Caco-2 (cell line): ENCODE measurements at regions of chr5 and their contacts with region 1.

Region 1: DNA sequence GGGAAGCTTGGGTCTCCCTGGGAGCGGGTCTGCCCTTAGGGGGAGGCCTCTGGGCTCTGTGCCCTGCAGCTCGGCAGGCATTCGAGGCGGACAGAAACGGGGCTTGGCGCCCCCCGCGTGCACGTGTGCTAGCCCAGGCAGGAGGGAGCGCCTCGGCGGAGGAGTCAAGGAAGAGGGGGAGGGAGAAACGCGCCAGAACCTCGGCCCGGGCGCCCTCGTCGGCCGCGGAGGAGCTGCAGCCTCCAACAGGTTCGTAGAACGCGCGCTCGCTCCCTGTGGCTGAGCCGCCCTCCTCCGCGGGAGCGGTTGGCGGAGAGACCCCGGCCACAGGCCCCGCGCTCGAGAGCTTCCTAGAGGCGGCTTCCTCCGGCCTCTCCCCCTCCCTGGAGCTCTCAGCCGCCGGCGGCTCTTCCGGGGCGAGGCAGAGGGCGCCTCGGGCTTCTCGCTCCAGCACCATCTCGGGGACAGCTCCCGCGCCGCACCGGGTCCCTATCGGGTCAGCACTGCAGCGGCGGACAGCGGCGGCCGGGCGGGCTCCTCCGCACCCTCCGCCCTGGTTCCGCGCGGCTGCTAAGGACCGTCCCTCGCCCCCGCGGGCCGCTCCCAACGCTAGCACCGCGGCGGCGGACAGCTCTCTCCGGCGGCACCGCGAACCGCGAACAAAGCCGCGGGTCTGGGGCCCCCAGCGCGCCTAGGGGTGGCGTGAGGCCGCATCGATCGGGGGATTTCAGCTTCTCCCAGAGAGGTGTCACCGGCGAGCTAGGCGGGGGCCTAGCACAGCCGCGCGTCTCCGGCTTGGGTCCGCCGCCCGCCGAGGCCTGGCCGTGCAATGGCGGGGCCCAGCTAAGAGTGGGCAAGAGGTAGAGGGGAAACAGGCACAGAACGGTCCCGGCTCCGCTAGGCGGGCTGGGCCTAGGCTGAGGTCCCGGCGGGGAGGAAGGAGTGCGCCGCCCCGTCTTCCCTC is 74.6 kb upstream of the CPLX2 start:
- DNase-seq: peak; percentile 84 to 95
- H3K4me3 ChIP-seq: peak overlapping the region; percentile 29
- H3K4me3 Mint-ChIP-seq: peak overlapping the region; percentile 65
- H3K27ac Mint-ChIP-seq: no peak overlapping the region
- H3K4me1 ChIP-seq: peaks cover 10% of the 10 kb centered on the region; the same call in 1 of the 2 replicates
- H3K4me1 Mint-ChIP-seq: no peaks in the 10 kb centered on the region
- H3K27me3 ChIP-seq: peaks cover 1% of the 10 kb centered on the region; the same call in 1 of the 2 replicates
- H3K27me3 Mint-ChIP-seq: peaks cover 21% of the 10 kb centered on the region
- CTCF ChIP-seq: no peak

Region 2: GRCh38 chr5:175873088-175873454 is 76.3 kb after region 1 on chr5:
- CTCF ChIA-PET with region 1: interaction called, 11 read pairs
- POLR2A ChIA-PET with region 1: no interaction called
- intact Hi-C with region 1: loop called (anchors 5 kb)
- DNase-seq: no peak
- H3K4me3 ChIP-seq: no peak overlapping the region
- H3K4me3 Mint-ChIP-seq: no peak overlapping the region
- H3K27ac Mint-ChIP-seq: no peak overlapping the region
- H3K4me1 ChIP-seq: peaks cover 2% of the 10 kb centered on the region
- H3K4me1 Mint-ChIP-seq: peaks cover 6% of the 10 kb centered on the region
- H3K27me3 ChIP-seq: no peaks in the 10 kb centered on the region
- H3K27me3 Mint-ChIP-seq: peaks cover 11% of the 10 kb centered on the region
- CTCF ChIP-seq: no peak